ENCODE measurements at regions of chr2 and their contacts with region 1.

Region 1: GRCh38 chr2:186544255-186544675 is 45.6 kb upstream of the ITGAV start:
- DNase-seq: peak; percentile 91
- ATAC-seq: peak; percentile 86
- H3K4me3 ChIP-seq: peak overlapping the region; percentile 51
- H3K27ac ChIP-seq: peak overlapping the region; percentile 93
- H3K4me1 ChIP-seq: peaks cover 36% of the 10 kb centered on the region
- H3K27me3 ChIP-seq: no peaks in the 10 kb centered on the region
- CTCF ChIP-seq: no peak

Region 2: DNA sequence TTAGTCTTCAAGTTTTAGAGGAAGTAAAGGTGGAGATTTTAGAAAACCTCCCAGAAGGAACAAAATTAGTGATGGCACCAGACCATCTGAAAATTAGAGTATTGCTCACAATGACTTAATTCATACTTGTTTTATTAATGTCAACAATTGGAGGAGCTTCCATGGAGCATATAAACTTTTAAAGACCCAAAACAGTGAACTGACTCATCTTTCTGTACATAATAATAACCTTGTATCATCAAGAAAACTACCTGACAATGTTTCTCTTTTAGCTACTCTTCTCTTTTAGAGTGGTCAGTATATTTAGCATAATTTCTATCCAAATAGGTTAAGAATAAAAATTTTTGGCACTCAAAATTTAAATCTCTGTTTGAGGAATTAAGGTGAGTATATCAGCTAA is 38.4 kb after region 1 on chr2:
- CTCF ChIA-PET with region 1: no interaction called
- POLR2A ChIA-PET with region 1: no interaction called
- intact Hi-C with region 1: loop called (anchors 2 kb)
- DNase-seq: peak; percentile 57
- ATAC-seq: peak; percentile 94
- H3K4me3 ChIP-seq: no peak overlapping the region
- H3K27ac ChIP-seq: no peak overlapping the region
- H3K4me1 ChIP-seq: peaks cover 16% of the 10 kb centered on the region
- H3K27me3 ChIP-seq: no peaks in the 10 kb centered on the region
- CTCF ChIP-seq: no peak

Region 3: GRCh38 chr2:187627153-187627552 is 1082.9 kb after region 1 on chr2:
- CTCF ChIA-PET with region 1: no interaction called
- POLR2A ChIA-PET with region 1: interaction called, 18 read pairs
- intact Hi-C with region 1: no loop called
- DNase-seq: no peak
- ATAC-seq: no peak
- H3K4me3 ChIP-seq: no peak overlapping the region
- H3K27ac ChIP-seq: no peak overlapping the region
- H3K4me1 ChIP-seq: no peaks in the 10 kb centered on the region
- H3K27me3 ChIP-seq: no peaks in the 10 kb centered on the region
- CTCF ChIP-seq: no peak

Measured in PC-3 (cell line).